ENCODE measurements at regions of chr5 and their contacts with region 1.

Region 1: GRCh38 chr5:133423618-133424282 is 188.6 kb downstream of the FSTL4 start:
- DNase-seq: peak; percentile 80
- ATAC-seq: peak; percentile 79
- H3K4me3 ChIP-seq: no peak overlapping the region
- H3K4me3 Mint-ChIP-seq: no peak overlapping the region
- H3K27ac ChIP-seq: no peak overlapping the region
- H3K27ac Mint-ChIP-seq: no peak overlapping the region
- H3K4me1 ChIP-seq: peaks cover 0 to 13% of the 10 kb centered on the region in 2 donors
- H3K4me1 Mint-ChIP-seq: peaks cover 7% of the 10 kb centered on the region
- H3K27me3 ChIP-seq: no peaks in the 10 kb centered on the region
- H3K27me3 Mint-ChIP-seq: peaks cover 28% of the 10 kb centered on the region
- CTCF ChIP-seq: peak; percentile 98

Region 2: GRCh38 chr5:133406977-133407678 is 16.6 kb before region 1 on chr5:
- CTCF ChIA-PET with region 1: interaction called, 11 read pairs
- POLR2A ChIA-PET with region 1: no interaction called
- intact Hi-C with region 1: no loop called
- DNase-seq: no peak
- ATAC-seq: no peak
- H3K4me3 ChIP-seq: no peak overlapping the region
- H3K4me3 Mint-ChIP-seq: no peak overlapping the region
- H3K27ac ChIP-seq: no peak overlapping the region
- H3K27ac Mint-ChIP-seq: no peak overlapping the region
- H3K4me1 ChIP-seq: no peaks in the 10 kb centered on the region
- H3K4me1 Mint-ChIP-seq: no peaks in the 10 kb centered on the region
- H3K27me3 ChIP-seq: no peaks in the 10 kb centered on the region
- H3K27me3 Mint-ChIP-seq: peaks cover 16% of the 10 kb centered on the region
- CTCF ChIP-seq: no peak

Region 3: GRCh38 chr5:134451936-134452505 is 1028.3 kb after region 1 on chr5:
- CTCF ChIA-PET with region 1: no interaction called
- POLR2A ChIA-PET with region 1: no interaction called
- intact Hi-C with region 1: no loop called
- DNase-seq: no peak
- ATAC-seq: no peak
- H3K4me3 ChIP-seq: no peak overlapping the region
- H3K4me3 Mint-ChIP-seq: no peak overlapping the region
- H3K27ac ChIP-seq: no peak overlapping the region
- H3K27ac Mint-ChIP-seq: no peak overlapping the region
- H3K4me1 ChIP-seq: peaks cover 13 to 17% of the 10 kb centered on the region in 2 donors
- H3K4me1 Mint-ChIP-seq: peaks cover 20% of the 10 kb centered on the region
- H3K27me3 ChIP-seq: no peaks in the 10 kb centered on the region
- H3K27me3 Mint-ChIP-seq: no peaks in the 10 kb centered on the region
- CTCF ChIP-seq: no peak